ENCODE measurements at regions of chr2 and their contacts with region 1.

Region 1: GRCh38 chr2:63698825-63699548 is 110.2 kb downstream of the MDH1 start:
- DNase-seq: peak in 4 of 5 donors; percentile 50 to 75 (median 64)
- ATAC-seq: peak; percentile 85 to 98 (median 97)
- H3K4me3 ChIP-seq: no peak overlapping the region
- H3K27ac ChIP-seq: peak overlapping the region in 11 of 12 donors; percentile 16 to 68 (median 49)
- H3K4me1 ChIP-seq: peaks cover 0 to 14% (median 5%) of the 10 kb centered on the region in 12 donors
- H3K27me3 ChIP-seq: no peaks in the 10 kb centered on the region
- CTCF ChIP-seq: peak; percentile 33 to 74 (median 55)
- POLR2A ChIP-seq: no peak

Region 2: DNA sequence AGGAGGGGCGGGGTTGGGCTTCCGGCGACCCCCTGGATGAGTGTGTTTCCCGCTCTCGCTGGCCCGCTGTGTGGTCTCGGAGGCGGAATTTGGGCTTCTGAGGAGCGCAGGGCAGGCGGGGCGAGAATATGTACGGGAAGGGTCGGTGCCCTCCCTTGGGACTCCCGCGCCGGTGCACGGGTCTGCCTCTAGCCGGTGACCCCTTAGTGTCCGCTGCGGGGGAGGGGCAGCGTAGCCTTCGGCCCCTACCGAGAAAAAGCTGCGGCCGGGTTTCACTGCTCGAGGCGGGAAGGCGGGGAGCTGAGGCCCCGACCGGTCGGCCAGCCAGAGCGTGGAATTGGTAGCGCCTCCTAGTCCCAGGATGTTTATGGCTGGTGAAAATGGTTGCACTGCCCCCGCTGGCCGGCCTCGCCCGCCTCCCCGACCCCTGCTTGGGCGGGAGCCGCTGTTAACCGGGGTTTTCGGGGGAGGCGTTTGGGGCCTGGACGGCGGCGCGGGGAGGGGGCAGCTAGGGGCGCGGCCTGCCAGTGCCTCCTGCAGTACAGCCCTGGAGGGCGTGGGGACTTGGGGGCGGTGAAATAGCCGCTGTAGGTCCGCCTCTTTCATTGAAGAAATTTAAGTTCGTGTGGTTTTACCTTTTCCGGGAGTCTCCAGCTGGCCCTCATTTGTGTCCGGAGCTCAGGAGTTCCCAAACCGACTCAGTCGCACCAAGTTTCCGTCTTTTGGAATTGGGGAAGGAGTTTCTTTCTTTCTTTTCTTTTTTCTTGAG is 142.5 kb after region 1 on chr2 and contains the start of gene UGP2:
- intact Hi-C with region 1: loop called in 3 of 10 experiments (anchors 1 to 5 kb)
- DNase-seq: peak; percentile 91 to 96 (median 94)
- ATAC-seq: peak; percentile 81 to 90 (median 88)
- H3K4me3 ChIP-seq: peak within 1 kb of the TSS; percentile 74 to 98 (median 89)
- H3K27ac ChIP-seq: peak within 1 kb of the TSS; percentile 98 to 100 (median 99)
- H3K4me1 ChIP-seq: peaks cover 0 to 45% (median 30%) of the 10 kb centered on the region in 12 donors
- H3K27me3 ChIP-seq: no peaks in the 10 kb centered on the region
- CTCF ChIP-seq: peak in 10 of 12 donors; percentile 7 to 68 (median 24)
- POLR2A ChIP-seq: peak in 1 of 2 donors; percentile 77
- total RNA-seq, gene UGP2: 175 to 972 (median 331) TPM

Region 3: DNA sequence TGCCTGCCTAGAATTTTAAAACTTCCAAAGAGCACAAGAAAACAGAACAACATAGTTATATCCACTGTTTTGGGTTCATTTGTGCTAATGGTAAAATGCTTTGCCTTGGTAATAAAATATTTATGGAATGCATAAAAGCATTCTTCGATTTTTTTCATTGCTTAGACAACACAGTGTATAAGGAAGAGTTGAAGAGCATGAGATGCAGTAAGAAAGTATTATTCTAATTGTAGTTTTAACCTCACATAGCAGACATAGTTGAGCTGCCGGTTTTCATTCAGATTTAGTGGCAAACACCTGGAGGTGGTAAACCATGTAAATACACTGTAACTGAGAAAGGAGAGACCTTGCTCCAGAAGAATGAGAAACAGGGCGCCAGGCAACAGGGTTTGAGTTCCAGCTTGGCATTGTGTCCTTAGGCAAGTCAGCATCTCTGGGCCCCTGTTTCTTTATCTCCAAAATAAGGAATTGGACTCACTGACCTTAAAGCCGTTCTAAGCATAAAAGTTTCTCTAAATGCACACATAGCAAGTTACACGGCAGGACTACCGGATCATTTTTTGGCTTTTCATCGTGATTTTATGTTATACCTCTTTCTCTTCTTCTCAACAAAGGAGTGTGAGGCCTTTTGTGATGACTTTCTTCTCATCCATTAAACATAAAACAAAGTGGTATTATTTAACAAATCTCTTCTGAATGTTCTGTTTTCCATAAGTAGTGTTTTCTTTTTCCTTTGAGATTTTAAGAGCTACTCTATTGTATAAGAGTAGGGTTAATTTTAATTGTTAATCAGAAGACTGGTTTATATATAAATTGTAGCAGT is 150.6 kb after region 1 on chr2:
- intact Hi-C with region 1: loop called in 3 of 10 experiments (anchors 5 to 10 kb)
- DNase-seq: no peak
- ATAC-seq: no peak
- H3K4me3 ChIP-seq: peak overlapping the region in 1 of 12 donors; percentile 1
- H3K27ac ChIP-seq: peak overlapping the region in 9 of 12 donors; percentile 4 to 64 (median 6)
- H3K4me1 ChIP-seq: peaks cover 10 to 92% (median 81%) of the 10 kb centered on the region in 12 donors
- H3K27me3 ChIP-seq: no peaks in the 10 kb centered on the region
- CTCF ChIP-seq: no peak
- POLR2A ChIP-seq: no peak

Region 4: GRCh38 chr2:63861220-63861822 is 162.3 kb after region 1 on chr2:
- intact Hi-C with region 1: loop called in 8 of 10 experiments (anchors 2 to 10 kb)
- DNase-seq: peak in 4 of 5 donors; percentile 31 to 48 (median 46)
- ATAC-seq: peak in 3 of 4 donors; percentile 61 to 74 (median 71)
- H3K4me3 ChIP-seq: no peak overlapping the region
- H3K27ac ChIP-seq: peak overlapping the region in 2 of 12 donors; percentile 25 to 35
- H3K4me1 ChIP-seq: peaks cover 0 to 39% (median 16%) of the 10 kb centered on the region in 12 donors
- H3K27me3 ChIP-seq: no peaks in the 10 kb centered on the region
- CTCF ChIP-seq: peak; percentile 40 to 76 (median 58)
- POLR2A ChIP-seq: no peak

Region 5: DNA sequence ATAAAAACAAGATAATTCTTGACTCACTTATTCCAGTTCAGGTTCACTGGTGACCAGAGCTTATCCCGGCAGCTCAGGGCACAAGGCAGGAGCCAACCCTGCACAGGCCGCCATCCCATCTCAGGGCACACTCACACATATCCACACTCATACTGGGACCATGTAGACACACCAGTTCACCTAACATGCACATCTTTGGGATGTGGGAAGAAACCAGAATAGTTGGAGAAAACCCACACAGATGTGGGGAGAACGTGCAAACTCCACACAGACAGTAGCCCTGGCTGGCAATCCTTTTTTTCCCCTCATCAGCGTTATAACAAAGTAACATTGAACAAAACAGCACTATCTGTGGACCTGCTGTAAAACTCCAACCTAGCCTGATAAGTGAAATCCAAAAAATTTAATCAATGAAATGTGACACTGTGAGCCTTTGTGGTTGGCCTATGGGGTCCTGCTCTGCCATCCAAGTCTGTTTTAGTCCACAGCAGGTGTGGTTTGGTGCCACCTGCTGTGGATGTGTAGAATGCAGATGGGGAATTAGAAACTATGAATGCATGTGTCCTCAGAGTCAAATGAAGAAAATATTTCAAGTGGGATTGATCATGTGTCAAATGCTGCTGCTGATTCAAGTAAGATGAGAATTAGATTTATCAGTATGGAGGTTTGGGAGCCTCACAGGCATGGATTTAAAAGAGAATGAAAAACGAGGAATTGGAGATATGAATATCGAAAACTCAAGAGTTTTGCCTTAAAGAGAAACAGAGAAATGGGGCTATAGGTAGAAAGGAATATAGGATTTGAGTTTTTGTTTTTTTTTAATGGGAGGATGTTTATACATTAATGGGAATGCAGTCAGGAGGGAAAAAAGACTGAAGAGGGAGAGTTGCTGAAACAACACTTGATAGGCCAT is 189.8 kb after region 1 on chr2:
- intact Hi-C with region 1: loop called in 5 of 10 experiments (anchors 2 to 10 kb)
- DNase-seq: peak in 1 of 5 donors; percentile 13
- ATAC-seq: peak; percentile 57 to 83 (median 68)
- H3K4me3 ChIP-seq: no peak overlapping the region
- H3K27ac ChIP-seq: peak overlapping the region in 1 of 12 donors; percentile 16
- H3K4me1 ChIP-seq: peaks cover 0 to 13% (median 0%) of the 10 kb centered on the region in 12 donors
- H3K27me3 ChIP-seq: no peaks in the 10 kb centered on the region
- CTCF ChIP-seq: peak; percentile 47 to 76 (median 67)
- POLR2A ChIP-seq: no peak

Region 6: GRCh38 chr2:64000630-64001381 is 301.8 kb after region 1 on chr2:
- intact Hi-C with region 1: no loop called
- DNase-seq: no peak
- ATAC-seq: peak in 3 of 4 donors; percentile 41 to 45 (median 41)
- H3K4me3 ChIP-seq: no peak overlapping the region
- H3K27ac ChIP-seq: no peak overlapping the region
- H3K4me1 ChIP-seq: peaks cover 0 to 41% (median 22%) of the 10 kb centered on the region in 12 donors
- H3K27me3 ChIP-seq: no peaks in the 10 kb centered on the region
- CTCF ChIP-seq: peak in 4 of 12 donors; percentile 9 to 28 (median 14)
- POLR2A ChIP-seq: no peak

Region 7: DNA sequence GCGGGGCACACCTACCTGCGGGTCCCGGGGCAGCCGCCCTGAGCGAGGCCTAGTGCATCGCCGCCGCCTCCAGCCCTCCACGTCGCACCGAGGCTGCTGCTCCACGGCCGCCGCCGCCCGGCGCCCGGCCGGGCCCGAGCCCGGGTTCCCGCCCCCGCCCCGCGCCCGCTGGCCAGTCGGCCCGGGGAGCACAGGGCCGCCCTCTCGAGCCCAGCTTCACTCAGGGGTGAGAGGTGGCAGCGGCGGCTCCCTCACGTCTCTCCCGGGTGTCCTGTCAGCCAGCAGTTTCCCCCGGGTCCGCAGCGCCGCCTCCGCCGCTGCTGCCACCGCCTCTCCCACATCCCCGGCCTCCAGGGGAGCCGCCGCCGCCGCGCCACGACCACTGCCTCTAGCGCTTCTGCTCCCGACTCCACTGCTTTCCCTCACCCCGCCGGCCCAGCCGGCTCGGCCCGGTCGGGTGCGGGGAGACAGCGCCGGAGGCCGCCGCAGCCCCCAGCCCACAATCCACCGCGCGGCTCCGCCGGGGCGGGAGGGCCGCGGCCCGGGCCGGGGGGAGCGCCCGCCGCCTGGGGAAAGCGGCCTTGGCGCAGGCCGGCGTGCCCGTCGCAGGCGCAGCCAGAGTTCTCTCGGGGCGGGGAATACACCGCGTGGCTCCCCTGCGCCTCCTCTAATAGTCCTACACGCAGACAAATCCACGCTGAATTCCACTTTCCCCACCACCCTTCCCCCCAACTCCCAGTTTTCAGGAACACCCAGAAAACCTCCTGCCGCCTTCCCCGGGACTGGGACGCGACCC is 320.1 kb after region 1 on chr2 and contains the start of gene VPS54:
- intact Hi-C with region 1: loop called in 1 of 10 experiments (anchors 10 kb)
- DNase-seq: peak; percentile 63 to 84 (median 73)
- ATAC-seq: peak; percentile 55 to 92 (median 85)
- H3K4me3 ChIP-seq: peak within 1 kb of the TSS; percentile 60 to 92 (median 76)
- H3K27ac ChIP-seq: peak within 1 kb of the TSS; percentile 95 to 98 (median 97)
- H3K4me1 ChIP-seq: peaks cover 0 to 63% (median 33%) of the 10 kb centered on the region in 12 donors
- H3K27me3 ChIP-seq: no peaks in the 10 kb centered on the region
- CTCF ChIP-seq: peak in 4 of 12 donors; percentile 4 to 24 (median 12)
- POLR2A ChIP-seq: no peak
- total RNA-seq, gene VPS54: 8.7 to 14.0 (median 9.6) TPM

Measured in heart left ventricle (tissue), 16 donors.